CD8-positive, alpha-beta memory T cell (primary cell): ENCODE measurements at regions of chr1 and their contacts with region 1.

Region 1: DNA sequence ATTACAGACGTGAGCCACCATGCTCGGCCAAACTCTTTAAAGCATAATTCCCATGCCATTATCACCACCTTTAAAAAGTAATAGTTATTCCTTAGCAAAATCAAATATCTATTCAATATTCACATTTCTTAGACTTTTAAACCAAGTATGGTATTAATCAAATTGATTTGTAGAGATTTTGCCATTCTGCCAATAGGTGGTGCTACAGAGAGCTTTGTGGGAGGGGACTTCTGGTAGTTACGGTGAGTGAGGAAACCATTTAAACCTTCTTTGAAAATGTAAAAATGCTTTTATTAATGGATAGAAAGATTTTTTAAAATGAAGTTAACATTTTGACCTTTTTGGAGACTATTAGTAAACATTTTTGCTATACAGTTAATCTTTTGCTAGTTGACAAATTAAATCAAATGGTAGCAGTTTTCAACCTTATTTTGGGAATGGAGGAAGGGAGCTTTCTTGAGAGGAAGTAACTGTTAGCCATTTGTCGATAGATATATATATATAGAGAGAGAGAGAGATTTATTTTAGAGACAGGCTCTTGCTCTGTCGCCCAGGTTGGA is 19.3 kb downstream of the IARS2 start:
- DNase-seq: peak in 2 of 5 donors; percentile 24 to 40
- H3K4me3 ChIP-seq: no peak overlapping the region
- H3K4me3 Mint-ChIP-seq: peak overlapping the region in 6 of 7 donors; percentile 2 to 50 (median 6)
- H3K27ac ChIP-seq: no peak overlapping the region
- H3K27ac Mint-ChIP-seq: peak overlapping the region in 5 of 8 donors; percentile 5 to 80 (median 13)
- H3K4me1 ChIP-seq: no peaks in the 10 kb centered on the region
- H3K4me1 Mint-ChIP-seq: peaks cover 6 to 8% (median 7%) of the 10 kb centered on the region in 3 donors
- H3K27me3 ChIP-seq: no peaks in the 10 kb centered on the region
- H3K27me3 Mint-ChIP-seq: no peaks in the 10 kb centered on the region

Region 2: DNA sequence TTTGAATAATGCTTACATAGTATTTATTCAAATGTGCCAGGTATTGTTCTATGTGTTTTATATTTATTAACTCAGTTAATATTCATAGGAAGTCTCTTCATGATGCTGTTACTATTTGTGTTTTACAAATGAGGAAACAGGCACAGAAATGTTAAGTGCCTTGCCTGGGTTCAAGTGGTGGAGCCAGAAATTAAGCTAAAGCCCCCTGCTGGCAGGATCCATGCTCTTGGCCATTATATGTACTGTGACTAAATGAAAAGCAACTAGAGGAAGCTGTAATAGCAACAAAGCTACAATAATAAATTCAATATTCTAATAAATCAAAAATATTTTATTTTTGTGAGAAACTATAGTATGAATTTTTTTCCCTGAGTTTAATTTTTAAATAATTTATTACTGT is 10.7 kb after region 1 on chr1:
- CTCF ChIA-PET with region 1: interaction called, 10 read pairs
- POLR2A ChIA-PET with region 1: no interaction called
- DNase-seq: no peak
- H3K4me3 ChIP-seq: no peak overlapping the region
- H3K4me3 Mint-ChIP-seq: no peak overlapping the region
- H3K27ac ChIP-seq: no peak overlapping the region
- H3K27ac Mint-ChIP-seq: no peak overlapping the region
- H3K4me1 ChIP-seq: no peaks in the 10 kb centered on the region
- H3K4me1 Mint-ChIP-seq: peaks cover 5 to 11% (median 5%) of the 10 kb centered on the region in 3 donors
- H3K27me3 ChIP-seq: no peaks in the 10 kb centered on the region
- H3K27me3 Mint-ChIP-seq: no peaks in the 10 kb centered on the region

Region 3: GRCh38 chr1:220137019-220137786 is 24.0 kb after region 1 on chr1:
- CTCF ChIA-PET with region 1: no interaction called
- POLR2A ChIA-PET with region 1: no interaction called
- DNase-seq: peak in 2 of 5 donors; percentile 7 to 18
- H3K4me3 ChIP-seq: no peak overlapping the region
- H3K4me3 Mint-ChIP-seq: peak overlapping the region in 4 of 7 donors; percentile 4 to 56 (median 30)
- H3K27ac ChIP-seq: no peak overlapping the region
- H3K27ac Mint-ChIP-seq: peak overlapping the region; percentile 64 to 93 (median 82)
- H3K4me1 ChIP-seq: peaks cover 4% of the 10 kb centered on the region
- H3K4me1 Mint-ChIP-seq: peaks cover 11 to 16% (median 11%) of the 10 kb centered on the region in 3 donors
- H3K27me3 ChIP-seq: no peaks in the 10 kb centered on the region
- H3K27me3 Mint-ChIP-seq: no peaks in the 10 kb centered on the region